CD8-positive, alpha-beta T cell (primary cell): ENCODE measurements at regions of chr20 and their contacts with region 1.

Region 1: DNA sequence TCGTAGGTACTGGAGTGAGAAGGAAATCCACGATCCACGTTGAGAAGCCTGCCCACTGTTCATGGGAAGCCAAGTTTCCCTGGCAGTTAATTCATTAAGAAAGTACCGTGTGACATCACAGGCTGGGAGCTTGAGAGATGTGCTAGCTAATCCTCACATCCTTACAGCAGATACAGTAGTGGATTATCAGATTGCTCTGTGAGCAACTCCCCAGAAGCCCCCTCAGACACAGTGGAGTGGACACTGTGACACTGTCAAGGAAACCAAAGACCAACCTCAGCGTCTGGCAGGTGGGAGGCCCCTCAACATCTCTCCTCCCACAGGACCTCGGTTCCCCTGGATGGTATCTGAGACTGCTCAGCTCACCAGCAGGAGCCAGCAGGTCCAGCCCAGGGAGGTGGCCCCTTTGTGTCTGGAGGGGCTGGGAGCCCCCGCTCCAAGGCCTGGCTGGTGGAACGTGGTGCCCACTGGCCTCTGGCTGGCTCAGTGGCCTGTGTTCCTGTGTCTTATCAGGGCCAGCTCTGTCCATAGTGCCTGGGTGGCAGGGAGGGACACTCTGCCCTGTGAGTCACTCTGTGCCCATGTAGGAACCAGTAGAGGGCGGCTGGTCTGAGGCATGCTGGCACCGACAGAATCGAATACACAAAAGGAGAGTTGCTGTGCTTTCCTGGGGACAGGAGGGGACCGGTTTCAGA is 7.2 kb downstream of the PYGB start:
- DNase-seq: peak in 1 of 9 experiments; percentile 39
- ATAC-seq: no peak
- H3K4me3 ChIP-seq: no peak overlapping the region
- H3K4me3 Mint-ChIP-seq: no peak overlapping the region
- H3K27ac ChIP-seq: no peak overlapping the region
- H3K27ac Mint-ChIP-seq: peak overlapping the region; percentile 62
- H3K4me1 ChIP-seq: peaks cover 31% of the 10 kb centered on the region
- H3K4me1 Mint-ChIP-seq: peaks cover 78% of the 10 kb centered on the region
- H3K27me3 ChIP-seq: no peaks in the 10 kb centered on the region
- H3K27me3 Mint-ChIP-seq: no peaks in the 10 kb centered on the region
- CTCF ChIP-seq: no peak

Region 2: GRCh38 chr20:25148181-25148981 is 106.8 kb before region 1 on chr20:
- CTCF ChIA-PET with region 1: no interaction called
- POLR2A ChIA-PET with region 1: no interaction called
- intact Hi-C with region 1: loop called in 1 of 2 experiments (anchors 5 kb)
- DNase-seq: peak; percentile 22 to 83 (median 73)
- ATAC-seq: peak; percentile 97
- H3K4me3 ChIP-seq: peak overlapping the region; percentile 47 to 49
- H3K4me3 Mint-ChIP-seq: peak overlapping the region; percentile 89
- H3K27ac ChIP-seq: peak overlapping the region in 1 of 2 experiments; percentile 3
- H3K27ac Mint-ChIP-seq: peak overlapping the region; percentile 86
- H3K4me1 ChIP-seq: peaks cover 7% of the 10 kb centered on the region
- H3K4me1 Mint-ChIP-seq: peaks cover 8% of the 10 kb centered on the region
- H3K27me3 ChIP-seq: no peaks in the 10 kb centered on the region
- H3K27me3 Mint-ChIP-seq: peaks cover 4% of the 10 kb centered on the region
- CTCF ChIP-seq: no peak

Region 3: DNA sequence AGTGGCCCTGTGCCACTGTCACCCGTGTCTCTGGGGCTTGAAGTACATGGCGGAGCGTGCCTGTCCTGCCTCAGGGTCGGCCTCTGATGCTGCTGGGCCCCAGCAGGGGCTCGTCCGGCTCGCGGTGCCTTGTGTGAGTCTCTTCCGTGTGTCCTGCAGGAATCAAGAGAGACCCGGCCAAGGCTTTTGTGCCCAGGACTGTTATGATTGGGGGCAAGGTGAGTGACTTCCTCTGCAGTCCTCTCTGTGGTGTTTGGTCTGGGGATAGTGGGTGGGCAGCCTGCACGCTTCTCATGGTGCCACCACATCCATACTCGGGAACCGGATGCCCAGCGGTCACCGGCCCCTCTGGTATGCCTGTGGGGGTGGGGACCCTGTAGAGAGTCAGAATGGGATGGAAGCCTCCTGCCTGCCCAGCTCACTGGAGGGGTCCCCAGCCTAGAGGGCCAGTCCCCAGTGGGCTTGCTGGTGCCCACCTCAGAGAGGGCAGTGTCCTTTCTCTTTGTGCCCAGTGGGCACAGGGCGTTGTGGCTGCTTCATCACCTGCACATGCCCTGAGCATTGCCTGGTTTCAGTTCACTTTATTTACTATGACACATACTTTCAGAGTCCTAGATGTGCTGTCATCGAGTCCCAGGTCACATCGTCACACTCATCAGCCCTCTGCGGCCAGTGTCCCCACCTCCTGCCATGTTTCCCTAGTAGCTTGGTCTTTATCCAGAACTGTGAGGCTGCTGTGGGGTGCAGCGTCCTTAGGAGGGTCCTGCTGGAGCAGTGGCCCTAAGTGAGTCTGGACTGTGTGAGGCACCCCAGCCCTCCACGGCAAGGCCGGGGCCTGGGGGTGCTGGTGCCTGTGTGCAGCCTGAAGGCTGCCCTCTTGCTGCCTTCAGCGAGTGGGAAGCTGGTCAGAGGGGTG is 33.4 kb after region 1 on chr20:
- CTCF ChIA-PET with region 1: no interaction called
- POLR2A ChIA-PET with region 1: no interaction called
- intact Hi-C with region 1: no loop called
- DNase-seq: no peak
- ATAC-seq: no peak
- H3K4me3 ChIP-seq: no peak overlapping the region
- H3K4me3 Mint-ChIP-seq: no peak overlapping the region
- H3K27ac ChIP-seq: no peak overlapping the region
- H3K27ac Mint-ChIP-seq: no peak overlapping the region
- H3K4me1 ChIP-seq: no peaks in the 10 kb centered on the region
- H3K4me1 Mint-ChIP-seq: no peaks in the 10 kb centered on the region
- H3K27me3 ChIP-seq: no peaks in the 10 kb centered on the region
- H3K27me3 Mint-ChIP-seq: no peaks in the 10 kb centered on the region
- CTCF ChIP-seq: no peak

Region 4: DNA sequence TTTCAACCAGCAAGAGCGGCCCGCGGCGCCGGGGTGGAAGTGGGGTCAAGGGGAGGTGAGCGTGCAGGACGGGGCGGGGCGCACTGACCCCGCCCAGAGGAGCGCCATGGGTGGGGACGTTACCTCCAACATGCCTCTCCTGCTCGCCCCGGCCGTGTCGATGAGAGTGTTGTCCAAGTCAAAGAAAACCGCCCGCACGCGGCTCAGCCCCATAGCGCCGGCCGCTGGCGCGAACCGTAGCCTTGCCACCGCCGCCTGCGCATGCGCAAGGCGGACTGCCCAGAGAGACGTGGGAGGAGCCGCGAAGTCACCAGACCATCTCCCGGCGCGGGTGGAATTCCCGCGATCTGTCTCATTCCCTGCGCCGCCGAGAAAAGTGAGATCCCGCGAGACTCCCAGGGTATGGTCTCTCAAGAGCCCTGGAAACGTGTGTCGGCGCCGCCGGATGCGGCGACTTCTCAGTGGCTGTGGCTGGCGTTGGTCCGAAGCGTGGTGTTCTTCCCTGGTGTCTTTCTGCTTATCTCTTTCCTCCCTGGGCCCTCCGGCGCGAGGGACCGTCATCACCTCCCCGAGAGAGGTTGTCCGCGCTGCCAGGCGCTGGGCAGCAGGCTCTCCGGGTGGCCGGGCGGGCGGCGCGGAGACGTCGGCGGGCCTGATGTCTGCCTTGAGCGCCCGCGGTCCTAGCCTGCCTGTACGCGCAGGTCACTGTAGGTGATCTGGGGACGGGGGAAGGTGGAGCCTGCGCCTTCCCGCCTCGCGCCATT is 368.8 kb after region 1 on chr20 and contains the start of gene NANP:
- CTCF ChIA-PET with region 1: no interaction called
- POLR2A ChIA-PET with region 1: no interaction called
- intact Hi-C with region 1: loop called in 1 of 2 experiments (anchors 10 kb)
- DNase-seq: peak; percentile 56 to 94 (median 78)
- ATAC-seq: peak; percentile 79
- H3K4me3 ChIP-seq: peak within 1 kb of the TSS; percentile 73 to 82
- H3K4me3 Mint-ChIP-seq: peak within 1 kb of the TSS; percentile 96
- H3K27ac ChIP-seq: peak within 1 kb of the TSS; percentile 48 to 67
- H3K27ac Mint-ChIP-seq: peak within 1 kb of the TSS; percentile 94
- H3K4me1 ChIP-seq: peaks cover 11% of the 10 kb centered on the region
- H3K4me1 Mint-ChIP-seq: peaks cover 20% of the 10 kb centered on the region
- H3K27me3 ChIP-seq: no peaks in the 10 kb centered on the region
- H3K27me3 Mint-ChIP-seq: no peaks in the 10 kb centered on the region
- CTCF ChIP-seq: no peak
- total RNA-seq, gene NANP: 2.0 to 2.2 TPM